A549 (cell line): ENCODE measurements at regions of chr17 and their contacts with region 1.

Region 1: DNA sequence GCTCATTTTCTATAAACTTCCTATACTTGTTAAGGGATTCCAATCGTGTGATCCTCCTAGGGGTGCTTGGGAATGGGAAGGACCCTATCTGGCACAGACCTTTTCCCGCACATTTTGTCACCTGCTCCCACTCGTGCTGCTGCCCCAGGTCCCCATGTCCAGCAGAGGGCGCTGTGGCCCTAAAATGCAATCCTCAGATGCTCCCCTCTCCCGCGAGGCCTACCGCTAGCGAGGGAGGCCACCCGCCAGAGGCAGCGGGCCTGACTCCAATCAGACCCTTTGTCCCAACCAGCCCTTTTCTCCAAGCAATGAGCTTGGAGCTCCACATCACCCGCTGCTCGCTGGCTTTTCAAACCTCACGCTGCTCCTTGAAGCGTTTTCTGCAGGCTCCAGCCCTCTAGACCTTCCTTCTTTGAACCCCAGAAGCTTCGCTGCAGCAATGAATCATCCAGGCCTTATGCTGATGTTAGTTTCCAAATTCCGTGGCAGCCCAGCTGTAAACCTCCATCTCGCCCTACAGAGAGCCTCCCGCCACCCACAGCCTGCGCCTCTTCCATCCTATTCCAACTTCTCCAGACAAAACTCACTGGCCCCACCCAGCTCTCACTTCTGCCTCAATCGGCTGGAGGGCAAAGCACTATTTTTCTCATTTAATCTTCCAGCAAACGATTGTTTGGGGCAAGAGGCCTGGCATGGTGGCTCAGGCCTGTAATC is 23.6 kb upstream of the FZD2 start:
- DNase-seq: peak; percentile 93 to 99
- ATAC-seq: peak; percentile 91 to 95
- H3K4me3 ChIP-seq: no peak overlapping the region
- H3K27ac ChIP-seq: peak overlapping the region; percentile 92 to 93
- H3K4me1 ChIP-seq: peaks cover 37% of the 10 kb centered on the region
- CTCF ChIP-seq: peak; percentile 99
- EP300 ChIP-seq: no peak
- POLR2A ChIP-seq: no peak
- RAD21 ChIP-seq: peak; percentile 100

Region 2: DNA sequence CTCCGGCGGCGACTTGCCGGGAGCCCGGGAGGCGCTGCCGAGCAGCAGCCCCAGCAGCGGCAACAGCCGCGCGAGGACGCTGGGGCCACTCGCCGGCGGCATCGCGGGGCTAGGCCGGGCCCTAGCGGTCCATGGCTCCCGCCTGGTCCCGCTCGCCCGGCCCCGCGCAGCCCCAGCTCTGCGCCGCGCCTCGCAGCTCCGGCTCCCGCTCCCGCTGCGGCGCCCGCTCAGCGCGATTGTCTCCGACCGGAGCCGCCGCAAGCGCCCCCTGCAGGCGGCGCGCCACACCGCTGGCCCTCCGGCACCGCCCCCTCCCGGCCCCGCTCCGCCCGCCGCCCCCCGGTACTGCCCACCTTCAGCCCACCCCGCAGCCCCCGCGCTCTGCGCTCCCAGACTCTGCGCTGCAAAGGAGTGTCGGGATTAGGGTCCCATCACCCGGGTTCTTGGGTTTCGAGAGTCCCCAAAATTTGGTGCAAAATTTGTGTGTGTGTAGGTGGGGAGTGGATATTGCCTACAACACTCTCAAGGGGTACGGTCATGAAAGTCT is 170.0 kb before region 1 on chr17 and contains the start of gene FAM171A2:
- CTCF ChIA-PET with region 1: interaction called, 21 read pairs
- POLR2A ChIA-PET with region 1: no interaction called
- DNase-seq: peak; percentile 66 to 74
- ATAC-seq: peak; percentile 76 to 83
- H3K4me3 ChIP-seq: peak within 1 kb of the TSS; percentile 77
- H3K27ac ChIP-seq: peak within 1 kb of the TSS; percentile 76 to 92
- H3K4me1 ChIP-seq: peaks cover 20% of the 10 kb centered on the region
- CTCF ChIP-seq: peak; percentile 98
- EP300 ChIP-seq: no peak
- POLR2A ChIP-seq: peak; percentile 36
- RAD21 ChIP-seq: peak in 1 of 2 experiments; percentile 42; a peak in 2 of 5 replicates
- polyA plus RNA-seq, gene FAM171A2: 1.8 and 2.7 TPM in 2 replicates

Region 3: DNA sequence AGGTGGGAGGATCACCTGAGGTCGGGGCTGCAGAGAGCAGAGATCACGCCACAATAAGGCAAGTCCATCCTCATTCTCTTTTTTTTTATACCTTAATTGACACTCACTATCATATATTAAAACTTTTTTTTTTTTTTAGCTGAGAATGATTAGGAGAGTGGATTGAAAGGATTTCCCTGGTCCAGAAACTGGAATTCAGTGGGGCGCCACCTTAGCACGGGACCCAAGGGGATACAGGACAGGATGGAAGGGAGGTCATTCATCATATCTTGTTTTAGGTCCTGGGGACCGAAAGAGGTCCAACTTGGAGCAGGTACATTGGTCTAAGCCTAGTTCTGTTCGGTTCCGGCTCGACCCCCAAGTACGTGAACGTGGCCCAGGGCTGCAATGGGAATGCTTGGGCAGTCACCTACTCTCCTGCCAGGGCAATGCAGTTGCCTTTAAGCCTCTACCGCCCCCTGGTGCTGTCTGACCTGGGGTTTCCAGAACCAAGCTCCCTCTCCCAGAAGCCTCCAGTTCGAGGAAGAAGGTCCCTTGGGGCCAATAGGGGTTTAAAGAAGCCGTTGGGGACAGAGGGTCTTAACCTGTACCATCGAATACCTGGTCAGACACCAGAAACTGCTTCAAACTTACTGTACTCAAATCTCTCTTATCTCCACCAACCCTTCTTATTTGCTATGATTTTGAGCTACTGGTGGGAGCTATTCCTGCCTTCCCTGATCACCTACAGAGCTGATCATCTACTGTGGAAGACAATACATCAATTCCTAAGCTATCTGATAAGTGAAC is 10.6 kb before region 1 on chr17:
- CTCF ChIA-PET with region 1: interaction called, 64 read pairs
- POLR2A ChIA-PET with region 1: interaction called, 8 read pairs
- DNase-seq: peak; percentile 84
- ATAC-seq: peak; percentile 97 to 99
- H3K4me3 ChIP-seq: no peak overlapping the region
- H3K27ac ChIP-seq: peak overlapping the region in 1 of 2 experiments; percentile 10; a peak in 1 of 6 replicates
- H3K4me1 ChIP-seq: peaks cover 2% of the 10 kb centered on the region; the same call in 1 of the 3 replicates
- CTCF ChIP-seq: peak; percentile 73
- EP300 ChIP-seq: no peak
- POLR2A ChIP-seq: no peak
- RAD21 ChIP-seq: peak; percentile 81 to 91

Region 4: DNA sequence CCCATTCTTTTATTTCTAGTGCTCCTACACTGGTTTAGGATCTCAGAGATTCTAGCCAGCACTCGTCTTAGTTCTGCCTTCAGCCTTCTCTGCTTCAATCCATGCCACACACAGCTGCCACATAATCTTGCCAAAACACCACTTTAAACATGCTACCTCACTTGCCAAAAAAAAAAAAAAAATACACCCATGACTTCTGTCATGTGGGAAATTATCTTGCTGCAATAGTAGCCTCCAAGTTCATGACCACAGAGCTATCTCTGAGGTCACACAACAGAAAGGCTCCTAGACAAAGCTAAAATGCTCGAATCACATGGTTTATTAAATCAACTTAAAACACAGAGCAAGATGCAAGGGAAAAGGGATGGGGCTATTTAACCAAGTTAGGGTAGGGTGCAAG is 41.7 kb after region 1 on chr17:
- CTCF ChIA-PET with region 1: interaction called, 103 read pairs
- POLR2A ChIA-PET with region 1: no interaction called
- DNase-seq: no peak
- ATAC-seq: 0 out of 6 replicates have a peak, but pooled peaks of 1 of the 2 experiments have one; percentile 32
- H3K4me3 ChIP-seq: no peak overlapping the region
- H3K27ac ChIP-seq: no peak overlapping the region
- H3K4me1 ChIP-seq: no peaks in the 10 kb centered on the region
- CTCF ChIP-seq: no peak
- EP300 ChIP-seq: no peak
- POLR2A ChIP-seq: no peak
- RAD21 ChIP-seq: no peak

Region 5: GRCh38 chr17:44607836-44608690 is 74.4 kb after region 1 on chr17:
- CTCF ChIA-PET with region 1: interaction called, 66 read pairs
- POLR2A ChIA-PET with region 1: interaction called, 5 read pairs
- DNase-seq: no peak
- ATAC-seq: no peak; a peak in 2 of 6 replicates
- H3K4me3 ChIP-seq: no peak overlapping the region
- H3K27ac ChIP-seq: peak overlapping the region; percentile 44 to 81; a peak in 4 of 6 replicates
- H3K4me1 ChIP-seq: peaks cover 11% of the 10 kb centered on the region
- CTCF ChIP-seq: no peak
- EP300 ChIP-seq: no peak
- POLR2A ChIP-seq: no peak
- RAD21 ChIP-seq: no peak

Region 6: GRCh38 chr17:44642834-44643233 is 109.1 kb after region 1 on chr17:
- CTCF ChIA-PET with region 1: interaction called, 181 read pairs
- POLR2A ChIA-PET with region 1: no interaction called
- DNase-seq: no peak
- ATAC-seq: no peak
- H3K4me3 ChIP-seq: no peak overlapping the region
- H3K27ac ChIP-seq: no peak overlapping the region
- H3K4me1 ChIP-seq: no peaks in the 10 kb centered on the region
- CTCF ChIP-seq: no peak
- EP300 ChIP-seq: no peak
- POLR2A ChIP-seq: no peak
- RAD21 ChIP-seq: no peak

Region 7: DNA sequence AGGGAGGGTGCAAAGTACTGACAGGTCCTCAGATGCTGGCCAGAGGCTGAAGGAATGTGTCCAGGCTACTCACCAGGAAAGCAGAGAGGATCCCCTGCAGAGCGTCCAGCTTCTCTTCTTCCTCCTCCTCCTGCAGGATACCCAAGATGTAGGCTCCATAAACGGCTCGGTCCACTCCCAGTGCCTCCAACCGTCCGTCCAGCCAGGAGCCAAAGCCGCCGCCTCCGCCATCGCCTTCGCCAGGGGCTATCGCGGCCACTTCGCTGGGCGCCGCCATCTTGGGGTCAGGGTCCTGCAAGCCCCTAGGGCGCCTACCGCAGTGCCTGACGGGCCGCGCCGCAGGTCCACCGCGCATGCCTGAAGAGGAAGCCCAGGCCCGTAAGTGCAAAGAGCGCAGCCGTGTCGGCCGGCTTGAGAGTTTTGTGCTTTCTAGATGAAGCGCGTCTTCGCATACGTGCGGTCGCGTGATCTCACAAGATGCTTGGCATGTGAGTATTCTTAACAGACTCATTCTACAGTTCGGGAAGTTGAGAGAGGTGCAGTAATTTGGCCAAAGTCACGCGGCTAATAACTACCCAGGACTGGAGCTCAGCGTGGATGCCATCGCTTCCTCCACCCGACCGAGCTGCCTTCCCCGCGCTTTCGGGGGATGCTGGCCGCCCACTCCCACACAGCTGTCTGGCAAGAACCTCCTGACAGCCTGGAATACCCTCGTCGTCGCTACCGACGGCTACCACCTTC is 156.0 kb after region 1 on chr17 and contains the start of gene CCDC43:
- CTCF ChIA-PET with region 1: interaction called, 11 read pairs
- POLR2A ChIA-PET with region 1: no interaction called
- DNase-seq: peak; percentile 96 to 97
- ATAC-seq: peak; percentile 96 to 99
- H3K4me3 ChIP-seq: peak within 1 kb of the TSS; percentile 67
- H3K27ac ChIP-seq: peak within 1 kb of the TSS; percentile 80 to 92
- H3K4me1 ChIP-seq: peaks cover 21% of the 10 kb centered on the region
- CTCF ChIP-seq: no peak
- EP300 ChIP-seq: no peak
- POLR2A ChIP-seq: peak; percentile 98
- RAD21 ChIP-seq: no peak; a peak in 1 of 5 replicates
- polyA plus RNA-seq, gene CCDC43: 24.1 and 34.3 TPM in 2 replicates